Activated CD4-positive, alpha-beta T cell treated with anti-CD3 and anti-CD28 coated beads, Interleukin-2, amount 10 ng/mL, durations not matched to agents 7 days and 5 days (primary cell): ENCODE measurements at regions of chr2 and their contacts with region 1.

Region 1: DNA sequence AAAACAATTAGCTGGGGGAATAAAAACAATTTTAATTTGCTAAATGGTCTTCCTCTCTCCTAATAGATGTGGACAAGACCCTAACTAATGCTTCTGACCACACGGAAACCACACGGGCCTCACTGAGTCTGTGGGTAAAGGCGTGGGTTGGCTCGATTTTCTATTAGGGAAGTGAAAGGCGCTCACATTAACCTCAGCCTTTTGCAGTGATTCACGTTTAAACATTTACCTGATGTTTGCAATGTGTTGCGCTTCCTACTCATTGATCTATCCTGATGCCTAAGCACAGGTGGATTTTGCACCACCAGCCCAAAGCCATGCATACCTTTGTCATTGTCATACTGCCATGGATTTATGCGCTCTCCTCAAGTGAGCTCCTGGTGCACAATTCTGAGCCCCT is 35.6 kb upstream of the NRP2 start:
- DNase-seq: no peak
- H3K4me3 Mint-ChIP-seq: no peak overlapping the region
- H3K27ac Mint-ChIP-seq: no peak overlapping the region
- H3K4me1 Mint-ChIP-seq: no peaks in the 10 kb centered on the region
- H3K27me3 Mint-ChIP-seq: peaks cover 5% of the 10 kb centered on the region

Region 2: DNA sequence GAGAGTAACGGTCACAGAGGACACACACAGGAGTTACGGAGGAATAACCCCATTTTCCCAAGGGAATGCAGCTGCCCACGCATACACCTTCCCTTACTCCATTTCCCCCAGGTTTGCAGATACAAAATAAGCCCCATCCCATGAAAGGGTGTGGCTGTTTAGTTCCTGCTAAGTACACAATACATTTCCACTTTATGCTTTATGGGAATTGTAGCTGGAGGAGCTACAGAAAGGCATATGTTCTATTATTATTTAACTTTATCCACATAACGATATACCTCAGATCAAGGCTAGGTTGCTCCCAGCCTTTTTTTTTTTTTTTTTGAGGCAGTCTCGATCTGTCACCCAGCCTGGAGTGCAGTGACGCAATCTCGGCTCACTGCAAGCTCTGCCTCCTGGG is 462.0 kb after region 1 on chr2:
- CTCF ChIA-PET with region 1: no interaction called
- POLR2A ChIA-PET with region 1: interaction called, 10 read pairs
- DNase-seq: no peak
- H3K4me3 Mint-ChIP-seq: no peak overlapping the region
- H3K27ac Mint-ChIP-seq: no peak overlapping the region
- H3K4me1 Mint-ChIP-seq: no peaks in the 10 kb centered on the region
- H3K27me3 Mint-ChIP-seq: no peaks in the 10 kb centered on the region